ENCODE measurements at regions of chr4 and their contacts with region 1.

Region 1: DNA sequence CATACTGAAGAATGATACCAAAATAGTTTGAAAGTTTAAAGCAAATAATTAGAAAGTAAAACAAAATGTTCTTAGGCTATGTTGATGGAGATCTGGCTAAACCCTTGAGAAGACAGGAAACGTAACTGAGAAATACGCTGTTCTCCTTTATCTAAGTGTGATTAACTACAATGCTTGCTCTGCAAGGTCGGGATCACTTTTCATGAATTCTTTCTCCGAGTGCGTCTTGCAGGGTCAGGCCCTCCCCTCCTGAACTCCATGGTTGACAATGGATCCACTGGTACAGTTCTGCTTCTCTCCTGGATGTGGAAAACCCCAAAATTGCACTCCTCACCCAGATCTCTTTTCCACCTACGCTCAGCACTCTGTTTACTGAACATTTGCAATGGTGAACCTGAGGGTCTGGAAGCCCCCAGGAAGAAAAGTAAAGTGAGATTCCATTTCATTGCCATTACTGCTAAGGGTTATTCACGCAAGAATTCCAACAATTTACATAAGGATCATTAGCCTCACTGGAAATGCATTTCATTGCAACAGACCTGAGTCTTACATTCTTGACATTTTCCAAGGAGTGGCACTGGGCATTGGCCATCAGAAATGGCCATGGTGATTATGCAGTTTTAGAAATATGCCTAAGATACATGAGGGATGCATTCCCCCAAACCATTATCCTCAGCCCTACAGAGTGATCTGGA is 24.6 kb upstream of the WWC2 start:
- DNase-seq: no peak
- ATAC-seq: no peak

Region 2: GRCh38 chr4:183261953-183262775 is 187.7 kb after region 1 on chr4:
- intact Hi-C with region 1: loop called (anchors 2 kb)
- DNase-seq: peak; percentile 84
- ATAC-seq: peak; percentile 98

Measured in Right ventricle myocardium superior (tissue), 1 donor.